Naive thymus-derived CD4-positive, alpha-beta T cell (primary cell): ENCODE measurements at regions of chr10 and their contacts with region 1.

Region 1: GRCh38 chr10:99248824-99249223 is 13.2 kb upstream of the HPSE2 start:
- DNase-seq: no peak
- ATAC-seq: no peak
- H3K4me3 ChIP-seq: no peak overlapping the region
- H3K4me3 Mint-ChIP-seq: no peak overlapping the region
- H3K27ac ChIP-seq: no peak overlapping the region
- H3K27ac Mint-ChIP-seq: no peak overlapping the region
- H3K4me1 ChIP-seq: no peaks in the 10 kb centered on the region
- H3K4me1 Mint-ChIP-seq: no peaks in the 10 kb centered on the region
- H3K27me3 ChIP-seq: no peaks in the 10 kb centered on the region
- H3K27me3 Mint-ChIP-seq: peaks cover 6 to 53% (median 34%) of the 10 kb centered on the region in 5 donors

Region 2: GRCh38 chr10:98748298-98748697 is 500.5 kb before region 1 on chr10:
- CTCF ChIA-PET with region 1: no interaction called
- POLR2A ChIA-PET with region 1: no interaction called
- intact Hi-C with region 1: loop called in 1 of 2 experiments (anchors 5 kb)
- DNase-seq: no peak
- ATAC-seq: no peak
- H3K4me3 ChIP-seq: no peak overlapping the region
- H3K4me3 Mint-ChIP-seq: no peak overlapping the region
- H3K27ac ChIP-seq: no peak overlapping the region
- H3K27ac Mint-ChIP-seq: no peak overlapping the region
- H3K4me1 ChIP-seq: no peaks in the 10 kb centered on the region
- H3K4me1 Mint-ChIP-seq: no peaks in the 10 kb centered on the region
- H3K27me3 ChIP-seq: no peaks in the 10 kb centered on the region
- H3K27me3 Mint-ChIP-seq: peaks cover 0 to 10% (median 0%) of the 10 kb centered on the region in 5 donors

Region 3: DNA sequence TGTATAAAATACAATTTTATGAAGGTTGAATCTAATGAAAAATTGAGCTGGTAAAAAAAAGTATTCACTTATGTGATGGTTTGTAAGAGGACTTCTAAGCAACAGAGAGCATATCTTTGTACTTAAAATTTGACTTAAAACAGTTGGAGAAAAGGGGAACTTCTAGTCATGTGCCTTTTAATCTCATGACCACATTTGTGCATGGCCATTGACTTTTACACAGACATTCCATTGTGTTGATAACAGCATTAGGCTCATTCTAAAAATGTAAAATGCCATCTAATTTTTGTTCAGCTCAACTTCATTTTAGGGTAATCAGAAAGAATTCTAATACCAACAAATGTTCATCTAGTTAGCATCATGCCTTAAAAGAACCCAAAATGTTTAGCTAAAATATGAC is 133.1 kb before region 1 on chr10:
- CTCF ChIA-PET with region 1: no interaction called
- POLR2A ChIA-PET with region 1: no interaction called
- intact Hi-C with region 1: no loop called
- DNase-seq: no peak
- ATAC-seq: no peak
- H3K4me3 ChIP-seq: no peak overlapping the region
- H3K4me3 Mint-ChIP-seq: no peak overlapping the region
- H3K27ac ChIP-seq: no peak overlapping the region
- H3K27ac Mint-ChIP-seq: no peak overlapping the region
- H3K4me1 ChIP-seq: no peaks in the 10 kb centered on the region
- H3K4me1 Mint-ChIP-seq: no peaks in the 10 kb centered on the region
- H3K27me3 ChIP-seq: no peaks in the 10 kb centered on the region
- H3K27me3 Mint-ChIP-seq: peaks cover 0 to 12% (median 3%) of the 10 kb centered on the region in 5 donors